Left colon (tissue), 2 donors: ENCODE measurements at regions of chr22 and their contacts with region 1.

Region 1: GRCh38 chr22:19291580-19292457 is at the start of gene CLTCL1:
- DNase-seq: peak; percentile 64 to 83
- ATAC-seq: peak; percentile 81
- total RNA-seq, gene CLTCL1: 2.1 to 4.6 TPM

Region 2: DNA sequence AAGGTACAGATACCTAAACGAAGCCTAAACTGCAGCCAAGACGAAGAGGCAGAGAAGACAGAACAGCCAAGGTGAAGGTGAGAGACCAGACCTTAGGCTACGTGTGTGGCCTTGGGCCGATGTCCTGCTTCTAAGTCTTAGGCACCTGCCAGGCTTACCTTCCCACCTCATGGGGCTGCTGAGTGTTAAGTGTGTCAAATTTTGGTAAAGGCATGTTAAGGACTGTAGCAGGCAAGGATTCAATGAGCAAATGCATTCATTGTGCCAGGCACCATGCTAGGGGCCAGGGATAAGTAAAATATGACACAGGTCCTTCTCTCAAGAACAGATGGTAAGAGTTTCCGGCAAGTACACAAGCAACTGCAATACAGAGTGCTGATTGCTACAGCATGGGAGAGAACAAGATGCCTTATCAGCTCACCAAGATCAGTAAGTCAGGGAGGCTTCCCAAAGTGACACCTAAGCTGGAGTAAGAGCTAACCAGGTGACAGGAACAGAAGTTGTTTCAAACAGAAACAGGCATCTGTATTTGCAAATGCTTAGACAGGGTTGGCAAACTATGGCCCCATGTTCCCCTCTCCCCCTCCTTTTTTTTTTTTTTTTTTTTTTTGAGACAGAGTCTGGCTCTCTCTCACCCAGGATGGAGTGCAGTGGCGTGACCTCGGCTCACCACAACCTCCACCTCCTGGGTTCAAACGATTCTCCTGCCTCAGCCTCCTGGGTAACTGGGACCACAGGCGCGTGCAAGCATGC is 47.0 kb before region 1 on chr22:
- intact Hi-C with region 1: loop called in 1 of 2 experiments (anchors 2 kb)
- DNase-seq: no peak
- ATAC-seq: no peak

Region 3: GRCh38 chr22:19488884-19489843 is 197.3 kb after region 1 on chr22:
- intact Hi-C with region 1: no loop called
- DNase-seq: no peak
- ATAC-seq: peak; percentile 70